Activated naive CD4-positive, alpha-beta T cell treated with anti-CD3 and anti-CD28 coated beads for 36 hours (primary cell): ENCODE measurements at regions of chr11 and their contacts with region 1.

Region 1: GRCh38 chr11:62081378-62082291 is 42.2 kb upstream of the INCENP start:
- DNase-seq: peak; percentile 91
- H3K4me3 Mint-ChIP-seq: no peak overlapping the region
- H3K27ac Mint-ChIP-seq: no peak overlapping the region
- H3K4me1 Mint-ChIP-seq: peaks cover 8% of the 10 kb centered on the region
- H3K27me3 Mint-ChIP-seq: no peaks in the 10 kb centered on the region

Region 2: GRCh38 chr11:61881397-61881796 is 200.2 kb before region 1 on chr11:
- CTCF ChIA-PET with region 1: interaction called, 17 read pairs
- intact Hi-C with region 1: no loop called
- DNase-seq: no peak
- H3K4me3 Mint-ChIP-seq: no peak overlapping the region
- H3K27ac Mint-ChIP-seq: no peak overlapping the region
- H3K4me1 Mint-ChIP-seq: no peaks in the 10 kb centered on the region
- H3K27me3 Mint-ChIP-seq: no peaks in the 10 kb centered on the region

Region 3: GRCh38 chr11:61928606-61929005 is 153.0 kb before region 1 on chr11:
- CTCF ChIA-PET with region 1: interaction called, 21 read pairs
- intact Hi-C with region 1: no loop called
- DNase-seq: no peak
- H3K4me3 Mint-ChIP-seq: no peak overlapping the region
- H3K27ac Mint-ChIP-seq: no peak overlapping the region
- H3K4me1 Mint-ChIP-seq: no peaks in the 10 kb centered on the region
- H3K27me3 Mint-ChIP-seq: peaks cover 10% of the 10 kb centered on the region

Region 4: GRCh38 chr11:61954851-61955421 is 126.7 kb before region 1 on chr11:
- CTCF ChIA-PET with region 1: interaction called, 105 read pairs
- intact Hi-C with region 1: loop called (anchors 2 kb)
- DNase-seq: peak; percentile 45
- H3K4me3 Mint-ChIP-seq: peak overlapping the region; percentile 47
- H3K27ac Mint-ChIP-seq: no peak overlapping the region
- H3K4me1 Mint-ChIP-seq: peaks cover 8% of the 10 kb centered on the region
- H3K27me3 Mint-ChIP-seq: peaks cover 13% of the 10 kb centered on the region

Region 5: DNA sequence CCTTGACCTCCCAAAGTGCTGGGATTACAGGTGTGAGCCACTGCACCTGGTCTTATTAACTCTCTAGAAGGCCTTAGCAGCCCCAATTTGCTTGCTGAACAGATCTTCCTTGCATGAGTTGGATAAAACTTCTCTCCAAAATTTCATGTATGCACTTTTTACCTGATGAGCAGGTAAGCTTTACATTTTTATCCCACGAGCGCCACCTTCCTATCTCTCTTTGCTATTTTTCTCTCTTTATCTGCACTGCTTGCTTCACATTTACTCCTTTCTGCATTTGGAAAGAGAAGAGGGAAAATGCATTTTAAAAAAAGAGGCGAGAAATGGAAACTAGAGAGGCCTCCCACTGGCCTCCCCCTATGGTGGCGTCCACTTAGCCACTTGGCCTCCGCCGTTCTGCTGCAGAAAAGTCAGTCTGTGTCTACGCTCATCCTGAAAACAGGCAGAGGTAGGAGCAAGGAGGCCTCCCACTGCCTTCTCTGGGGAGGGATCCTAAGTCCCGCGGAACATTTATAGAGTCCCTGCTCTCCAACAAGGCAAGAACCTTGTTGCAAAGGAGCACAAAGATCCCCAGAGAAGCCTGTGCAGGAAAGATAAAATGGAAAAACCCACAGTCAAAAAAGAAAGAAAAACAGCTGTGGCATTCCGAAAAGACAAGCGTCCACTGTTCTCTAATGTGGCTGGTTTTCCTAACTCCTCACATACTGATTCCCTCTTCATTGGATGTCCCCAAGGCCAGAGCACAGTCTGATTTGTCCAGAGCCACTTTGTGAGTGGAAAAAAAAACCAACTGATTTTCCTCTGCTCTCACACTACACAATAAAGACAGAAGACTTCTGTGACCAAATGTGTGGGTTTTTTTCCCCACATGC is 20.0 kb before region 1 on chr11:
- CTCF ChIA-PET with region 1: interaction called, 14 read pairs
- intact Hi-C with region 1: no loop called
- DNase-seq: no peak
- H3K4me3 Mint-ChIP-seq: no peak overlapping the region
- H3K27ac Mint-ChIP-seq: no peak overlapping the region
- H3K4me1 Mint-ChIP-seq: no peaks in the 10 kb centered on the region
- H3K27me3 Mint-ChIP-seq: no peaks in the 10 kb centered on the region

Region 6: GRCh38 chr11:62108017-62108750 is 26.5 kb after region 1 on chr11:
- CTCF ChIA-PET with region 1: interaction called, 92 read pairs
- intact Hi-C with region 1: loop called (anchors 1 kb)
- DNase-seq: peak; percentile 59
- H3K4me3 Mint-ChIP-seq: no peak overlapping the region
- H3K27ac Mint-ChIP-seq: no peak overlapping the region
- H3K4me1 Mint-ChIP-seq: peaks cover 19% of the 10 kb centered on the region
- H3K27me3 Mint-ChIP-seq: no peaks in the 10 kb centered on the region